Posterior cingulate gyrus (tissue), 11 donors: ENCODE measurements at regions of chr19 and their contacts with region 1.

Region 1: GRCh38 chr19:18865973-18866799 is 29.8 kb downstream of the CERS1 start:
- DNase-seq: peak in 8 of 10 donors; percentile 64 to 96 (median 73)

Region 2: DNA sequence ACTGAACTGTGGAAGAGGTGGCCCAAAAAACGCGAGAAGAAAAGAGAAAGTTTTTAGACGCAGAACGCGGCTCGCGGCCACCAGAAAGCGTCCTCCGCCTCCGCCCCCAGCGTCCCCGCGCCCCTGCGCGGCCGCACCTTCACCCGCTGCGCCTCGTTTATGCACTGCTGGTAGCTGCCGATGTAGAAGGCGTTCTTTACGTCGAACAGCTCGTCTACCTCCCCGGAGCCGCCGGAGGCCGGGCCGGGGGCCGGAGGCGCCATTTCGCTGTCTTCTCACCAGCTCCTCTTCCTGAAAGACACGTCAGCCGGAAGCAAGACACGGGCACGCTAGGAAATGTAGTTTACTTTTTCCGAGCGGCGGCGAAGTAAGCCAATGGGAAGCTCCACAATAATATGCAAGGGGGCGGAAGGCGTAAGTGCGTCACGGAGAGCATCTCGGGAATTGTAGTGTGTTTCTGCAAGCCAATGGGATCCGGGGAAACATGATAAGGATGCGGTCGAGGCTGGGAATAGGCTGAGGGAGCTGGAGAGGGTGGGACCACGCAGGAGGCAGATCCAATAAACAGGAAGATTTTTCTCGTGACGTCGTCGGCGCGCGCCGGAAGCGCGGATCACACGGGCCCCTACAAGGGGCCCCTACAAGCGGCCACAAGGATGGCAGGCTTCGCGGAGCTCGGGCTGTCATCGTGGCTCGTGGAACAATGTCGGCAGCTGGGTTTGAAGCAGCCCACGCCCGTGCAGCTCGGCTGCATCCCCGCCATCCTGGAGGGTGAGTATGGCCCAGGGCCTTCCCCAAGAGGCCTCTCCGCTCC is 53.1 kb after region 1 on chr19 and contains the starts of genes COPE and DDX49:
- intact Hi-C with region 1: loop called (anchors 2 kb)
- DNase-seq: peak; percentile 94 to 100 (median 98)